ENCODE measurements at regions of chr4 and their contacts with region 1.

Region 1: DNA sequence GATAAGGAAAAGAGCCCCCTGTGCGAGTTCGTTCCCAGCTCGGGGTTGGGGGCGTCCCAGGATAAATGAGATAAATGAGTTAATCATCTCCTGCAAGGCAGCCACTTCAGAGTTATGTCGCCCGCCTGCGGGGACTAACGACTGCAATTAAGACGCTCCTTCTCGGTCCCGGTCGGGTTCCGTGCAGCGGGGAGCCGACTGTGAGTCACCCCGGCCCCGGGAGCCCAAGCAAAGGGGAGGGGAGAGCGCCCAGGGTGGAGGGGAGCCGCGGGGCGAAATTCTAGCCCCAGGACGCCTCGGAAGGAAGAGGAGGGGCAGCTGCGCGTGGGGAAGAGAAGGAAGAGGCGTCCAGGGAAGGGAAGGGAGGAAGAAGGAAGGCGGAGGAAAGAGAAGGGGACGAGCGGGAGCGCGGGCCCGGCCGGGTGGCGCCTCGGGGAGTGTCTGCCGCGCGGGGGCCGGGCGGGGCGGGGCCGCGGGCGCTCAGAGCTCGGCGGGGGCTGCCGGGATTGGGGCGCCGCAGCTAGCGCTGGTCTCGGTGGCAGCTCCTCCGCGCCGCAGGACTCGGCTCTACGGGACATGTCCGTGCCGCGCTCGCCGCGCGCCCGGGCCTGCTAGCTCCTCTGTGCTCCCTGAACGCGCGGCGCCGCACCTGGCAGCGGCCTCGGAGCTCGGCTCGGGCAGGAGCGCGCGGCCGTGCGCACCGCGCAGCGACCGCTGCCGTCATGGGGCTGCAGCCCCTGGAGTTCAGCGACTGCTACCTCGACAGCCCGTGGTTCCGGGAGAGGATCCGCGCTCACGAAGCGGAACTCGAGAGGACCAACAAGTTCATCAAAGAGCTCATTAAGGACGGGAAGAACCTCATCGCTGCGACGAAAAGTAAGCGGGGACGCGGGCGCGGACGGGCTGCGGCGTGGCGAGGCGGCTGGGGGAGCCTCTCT is at the start of gene ARHGAP10:
- DNase-seq: peak; percentile 81 to 89 (median 81)
- ATAC-seq: peak; percentile 27 to 88 (median 80)
- H3K4me3 ChIP-seq: peak within 1 kb of the TSS; percentile 67 to 97 (median 86)
- H3K27ac ChIP-seq: peak within 1 kb of the TSS; percentile 83 to 96 (median 93)
- H3K4me1 ChIP-seq: peaks cover 0 to 38% (median 28%) of the 10 kb centered on the region in 12 donors
- H3K27me3 ChIP-seq: no peaks in the 10 kb centered on the region
- CTCF ChIP-seq: no peak
- POLR2A ChIP-seq: peak in 1 of 2 donors; percentile 67
- total RNA-seq, gene ARHGAP10: 30.6 to 64.2 (median 51.7) TPM

Region 2: DNA sequence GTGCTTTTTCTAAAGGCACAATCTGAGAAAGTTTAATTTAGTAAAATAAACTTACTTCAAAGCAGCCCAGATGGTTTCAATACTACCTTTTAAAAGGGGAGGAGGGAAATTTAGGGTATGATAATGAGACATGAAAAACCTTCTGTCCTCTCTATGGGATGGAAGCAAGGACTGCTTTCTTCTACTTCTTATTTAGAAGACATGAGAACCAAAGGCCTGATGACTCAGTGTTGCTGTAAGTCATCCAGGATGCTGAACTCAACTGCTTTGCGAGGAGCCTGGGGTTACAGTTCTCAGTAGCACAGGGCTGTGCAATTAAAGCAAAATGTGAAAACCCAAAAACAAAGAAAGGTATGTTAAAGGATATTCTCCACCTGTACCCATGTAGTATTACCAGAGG is 391.7 kb before region 1 on chr4:
- intact Hi-C with region 1: no loop called
- DNase-seq: no peak
- ATAC-seq: peak in 3 of 4 donors; percentile 45 to 85 (median 57)
- H3K4me3 ChIP-seq: no peak overlapping the region
- H3K27ac ChIP-seq: peak overlapping the region in 4 of 12 donors; percentile 19 to 42 (median 38)
- H3K4me1 ChIP-seq: peaks cover 0 to 4% (median 0%) of the 10 kb centered on the region in 12 donors
- H3K27me3 ChIP-seq: no peaks in the 10 kb centered on the region
- CTCF ChIP-seq: no peak
- POLR2A ChIP-seq: no peak

Region 3: GRCh38 chr4:147772459-147772969 is 40.7 kb after region 1 on chr4:
- intact Hi-C with region 1: loop called in 3 of 10 experiments (anchors 5 kb)
- DNase-seq: no peak
- ATAC-seq: peak; percentile 27 to 70 (median 50)
- H3K4me3 ChIP-seq: peak overlapping the region in 1 of 12 donors; percentile 7
- H3K27ac ChIP-seq: peak overlapping the region; percentile 9 to 85 (median 72)
- H3K4me1 ChIP-seq: peaks cover 12 to 87% (median 58%) of the 10 kb centered on the region in 12 donors
- H3K27me3 ChIP-seq: no peaks in the 10 kb centered on the region
- CTCF ChIP-seq: no peak
- POLR2A ChIP-seq: no peak

Region 4: DNA sequence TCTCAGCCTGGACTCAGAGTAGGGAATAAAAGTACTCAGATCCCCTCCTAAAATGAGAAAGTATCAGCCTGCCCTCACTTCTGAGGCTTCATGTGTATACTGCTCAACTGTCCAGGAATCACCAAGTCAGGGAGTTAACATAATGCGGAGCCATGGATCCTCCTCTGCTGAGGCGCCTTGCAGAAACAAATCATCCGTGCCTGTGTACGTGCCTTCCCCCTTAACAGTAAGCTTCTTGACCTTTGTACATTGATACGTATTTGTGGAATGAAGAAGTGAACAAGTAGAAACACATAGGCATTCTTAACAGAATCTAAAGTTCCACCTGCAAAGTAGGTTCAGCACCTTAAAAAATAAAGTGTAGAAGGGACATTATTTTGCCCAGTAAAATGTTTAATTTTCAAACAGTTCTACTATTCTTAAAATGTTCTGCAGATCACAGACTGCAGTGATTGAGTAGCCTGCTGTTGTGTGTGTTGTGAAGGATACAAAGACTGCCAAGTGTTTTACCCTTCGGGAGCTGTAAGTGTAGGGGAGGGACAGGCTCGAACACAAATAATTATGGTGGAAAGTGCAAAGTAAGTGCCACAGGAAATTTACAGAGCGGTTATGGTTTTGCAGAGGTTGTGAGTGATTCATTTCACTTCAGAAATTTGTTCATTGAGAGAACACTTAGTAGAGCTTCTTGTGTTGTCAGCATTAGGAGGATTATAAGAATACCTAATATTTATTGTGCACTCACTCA is 61.9 kb after region 1 on chr4:
- intact Hi-C with region 1: loop called in 2 of 10 experiments (anchors 5 to 10 kb)
- DNase-seq: no peak
- ATAC-seq: peak in 2 of 4 donors; percentile 23 to 26
- H3K4me3 ChIP-seq: no peak overlapping the region
- H3K27ac ChIP-seq: peak overlapping the region in 10 of 12 donors; percentile 1 to 64 (median 48)
- H3K4me1 ChIP-seq: peaks cover 5 to 55% (median 42%) of the 10 kb centered on the region in 12 donors
- H3K27me3 ChIP-seq: no peaks in the 10 kb centered on the region
- CTCF ChIP-seq: no peak
- POLR2A ChIP-seq: no peak

Region 5: DNA sequence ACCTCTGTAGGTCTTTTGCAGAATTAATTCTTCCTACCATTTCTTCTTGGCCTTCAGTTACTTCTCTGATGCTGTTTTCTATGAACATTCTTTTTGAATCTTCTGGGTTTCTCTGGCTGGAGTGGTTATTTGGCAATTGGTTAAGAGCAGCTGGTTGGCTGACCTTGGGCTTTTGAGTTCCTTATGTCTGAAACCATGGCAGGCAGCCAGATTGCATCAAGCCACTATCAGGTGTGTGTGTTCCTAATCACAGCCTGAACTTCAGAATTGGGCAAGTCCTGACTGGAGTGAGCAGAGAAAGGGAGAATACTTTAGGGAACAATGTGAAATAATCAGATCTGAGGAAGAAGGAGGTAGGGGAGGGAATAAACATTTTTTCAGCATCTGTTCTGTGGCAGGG is 90.3 kb after region 1 on chr4:
- intact Hi-C with region 1: loop called in 3 of 10 experiments (anchors 5 to 10 kb)
- DNase-seq: peak; percentile 67 to 93 (median 85)
- ATAC-seq: peak; percentile 71 to 83 (median 77)
- H3K4me3 ChIP-seq: no peak overlapping the region
- H3K27ac ChIP-seq: peak overlapping the region; percentile 28 to 91 (median 80)
- H3K4me1 ChIP-seq: peaks cover 11 to 73% (median 53%) of the 10 kb centered on the region in 12 donors
- H3K27me3 ChIP-seq: no peaks in the 10 kb centered on the region
- CTCF ChIP-seq: no peak
- POLR2A ChIP-seq: no peak

Region 6: DNA sequence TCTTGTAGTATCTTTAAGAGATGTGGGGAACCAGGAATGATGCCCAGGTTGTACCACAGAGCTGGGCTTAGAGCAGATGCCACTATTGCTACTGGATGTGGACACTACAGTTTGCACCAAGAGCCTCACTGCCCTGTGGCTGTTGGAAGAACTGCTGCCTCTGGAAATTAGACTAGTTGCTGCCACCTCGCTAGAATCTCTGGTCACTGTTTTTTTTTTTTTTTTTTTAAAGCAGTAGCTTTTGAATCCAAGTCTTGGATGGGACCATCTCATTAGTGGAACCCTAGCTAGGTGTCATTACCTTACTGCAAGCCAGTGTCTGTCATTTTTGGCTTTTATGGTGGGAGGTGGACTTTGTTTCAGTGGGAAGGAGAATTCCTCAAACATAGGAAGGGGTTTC is 105.6 kb after region 1 on chr4:
- intact Hi-C with region 1: loop called in 5 of 10 experiments (anchors 5 kb)
- DNase-seq: peak in 1 of 5 donors; percentile 33
- ATAC-seq: peak; percentile 58 to 73 (median 62)
- H3K4me3 ChIP-seq: no peak overlapping the region
- H3K27ac ChIP-seq: peak overlapping the region in 4 of 12 donors; percentile 22 to 85 (median 42)
- H3K4me1 ChIP-seq: peaks cover 0 to 66% (median 32%) of the 10 kb centered on the region in 12 donors
- H3K27me3 ChIP-seq: no peaks in the 10 kb centered on the region
- CTCF ChIP-seq: peak in 6 of 12 donors; percentile 15 to 50 (median 35)
- POLR2A ChIP-seq: no peak

Region 7: GRCh38 chr4:147866532-147867271 is 134.9 kb after region 1 on chr4:
- intact Hi-C with region 1: loop called in 5 of 10 experiments (anchors 1 to 10 kb)
- DNase-seq: peak; percentile 89 to 92 (median 90)
- ATAC-seq: peak; percentile 68 to 89 (median 86)
- H3K4me3 ChIP-seq: no peak overlapping the region
- H3K27ac ChIP-seq: peak overlapping the region in 5 of 12 donors; percentile 0 to 44 (median 7)
- H3K4me1 ChIP-seq: peaks cover 0 to 46% (median 22%) of the 10 kb centered on the region in 12 donors
- H3K27me3 ChIP-seq: no peaks in the 10 kb centered on the region
- CTCF ChIP-seq: peak; percentile 99 to 100 (median 100)
- POLR2A ChIP-seq: no peak

Measured in heart left ventricle (tissue), 16 donors.